GM10248 (cell line): ENCODE measurements at regions of chr5 and their contacts with region 1.

Region 1: DNA sequence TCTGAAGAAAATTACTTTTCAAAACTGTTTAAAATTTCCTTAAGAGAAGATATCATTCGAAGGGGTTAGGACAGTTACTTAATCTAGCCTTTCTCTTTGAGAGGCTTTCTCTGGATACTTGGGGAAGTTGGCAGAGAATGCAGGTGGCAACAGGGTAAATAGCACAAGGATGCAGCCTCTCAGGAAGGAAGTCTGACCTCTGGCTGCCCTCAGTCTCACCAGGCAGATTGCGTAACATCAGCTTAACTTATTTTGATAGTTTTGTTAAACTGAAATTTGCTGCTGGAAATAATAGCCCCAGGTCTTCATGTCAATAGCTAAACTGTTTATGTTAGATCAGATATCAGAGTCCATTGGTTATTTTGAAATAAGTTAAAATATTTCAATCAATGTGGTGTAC is 20.4 kb downstream of the CCDC192 start:
- DNase-seq: no peak
- CTCF ChIP-seq: no peak

Region 2: DNA sequence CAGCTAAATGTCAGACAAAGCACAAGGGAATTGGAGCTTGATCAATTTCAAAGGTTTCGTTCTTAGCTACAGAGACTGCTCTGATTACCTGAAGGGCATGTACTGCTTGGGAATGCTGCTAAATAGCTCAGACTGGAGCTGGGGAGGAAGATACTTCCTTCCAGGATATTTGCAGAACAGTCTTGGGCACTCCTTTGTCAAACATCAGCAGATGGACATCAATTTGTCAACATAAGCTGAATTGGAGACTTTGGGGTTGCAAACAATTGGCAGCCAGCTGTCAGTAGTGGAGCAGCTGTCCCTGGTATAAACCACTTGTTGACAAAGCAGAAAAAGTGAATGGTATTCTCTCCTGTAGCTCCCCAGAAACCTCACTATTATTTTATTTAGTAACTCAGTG is 161.6 kb after region 1 on chr5:
- CTCF ChIA-PET with region 1: no interaction called
- POLR2A ChIA-PET with region 1: interaction called, 11 read pairs
- DNase-seq: no peak
- CTCF ChIP-seq: no peak